ENCODE measurements at regions of chr1 and their contacts with region 1.

Region 1: GRCh38 chr1:11907275-11908094 is 18.7 kb downstream of the KIAA2013 start:
- DNase-seq: peak; percentile 95
- H3K4me3 Mint-ChIP-seq: peak overlapping the region; percentile 92
- H3K27ac Mint-ChIP-seq: peak overlapping the region; percentile 99
- H3K4me1 Mint-ChIP-seq: peaks cover 37% of the 10 kb centered on the region
- H3K27me3 Mint-ChIP-seq: peaks cover 16% of the 10 kb centered on the region

Region 2: GRCh38 chr1:11051781-11052511 is 855.5 kb before region 1 on chr1:
- CTCF ChIA-PET with region 1: no interaction called
- POLR2A ChIA-PET with region 1: no interaction called
- intact Hi-C with region 1: no loop called
- DNase-seq: no peak
- H3K4me3 Mint-ChIP-seq: no peak overlapping the region
- H3K27ac Mint-ChIP-seq: peak overlapping the region; percentile 34
- H3K4me1 Mint-ChIP-seq: peaks cover 6% of the 10 kb centered on the region
- H3K27me3 Mint-ChIP-seq: no peaks in the 10 kb centered on the region

Region 3: DNA sequence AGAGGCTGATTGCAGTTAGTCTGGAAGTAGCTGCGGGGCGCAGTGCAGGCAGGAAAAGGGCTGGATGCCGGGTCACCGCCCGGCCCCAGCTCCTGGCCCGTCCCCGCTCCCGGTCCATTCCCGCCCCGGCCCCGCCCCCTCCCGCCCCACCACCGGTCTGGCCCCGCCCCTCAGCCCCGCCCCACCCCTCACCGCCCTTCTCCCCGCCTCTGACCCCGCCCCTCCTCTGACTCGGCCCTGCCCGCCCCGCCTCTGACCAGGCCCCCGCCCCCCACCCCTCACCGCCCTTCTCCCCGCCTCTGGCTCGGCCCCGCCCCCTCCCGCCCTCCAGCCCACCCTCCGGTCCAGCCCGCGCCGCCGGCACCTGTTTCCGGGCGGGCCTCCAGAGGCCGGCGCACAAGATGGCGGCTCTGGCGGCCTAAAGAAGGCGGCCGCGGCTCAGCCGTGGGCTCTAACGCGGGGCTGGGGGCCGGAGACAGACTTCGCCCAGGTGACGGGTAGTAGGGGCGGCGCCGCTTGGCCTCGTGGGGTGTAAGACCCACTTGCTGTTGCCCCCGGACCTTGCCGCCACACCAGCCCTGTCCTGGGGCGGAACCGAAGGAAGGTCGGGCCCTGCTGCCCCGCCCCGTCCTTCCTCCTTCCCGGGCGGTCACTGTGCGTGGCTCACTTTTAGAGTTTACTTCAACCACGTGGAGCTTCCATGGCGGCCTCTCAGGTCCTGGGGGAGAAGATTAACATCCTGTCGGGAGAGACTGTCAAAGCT is 634.5 kb before region 1 on chr1 and contains the start of gene UBIAD1:
- CTCF ChIA-PET with region 1: no interaction called
- POLR2A ChIA-PET with region 1: interaction called, 3 read pairs
- intact Hi-C with region 1: loop called (anchors 5 kb)
- DNase-seq: peak; percentile 90
- H3K4me3 Mint-ChIP-seq: peak within 1 kb of the TSS; percentile 96
- H3K27ac Mint-ChIP-seq: peak within 1 kb of the TSS; percentile 89
- H3K4me1 Mint-ChIP-seq: peaks cover 30% of the 10 kb centered on the region
- H3K27me3 Mint-ChIP-seq: no peaks in the 10 kb centered on the region
- total RNA-seq, gene UBIAD1: 21.4 to 22.4 TPM

Region 4: DNA sequence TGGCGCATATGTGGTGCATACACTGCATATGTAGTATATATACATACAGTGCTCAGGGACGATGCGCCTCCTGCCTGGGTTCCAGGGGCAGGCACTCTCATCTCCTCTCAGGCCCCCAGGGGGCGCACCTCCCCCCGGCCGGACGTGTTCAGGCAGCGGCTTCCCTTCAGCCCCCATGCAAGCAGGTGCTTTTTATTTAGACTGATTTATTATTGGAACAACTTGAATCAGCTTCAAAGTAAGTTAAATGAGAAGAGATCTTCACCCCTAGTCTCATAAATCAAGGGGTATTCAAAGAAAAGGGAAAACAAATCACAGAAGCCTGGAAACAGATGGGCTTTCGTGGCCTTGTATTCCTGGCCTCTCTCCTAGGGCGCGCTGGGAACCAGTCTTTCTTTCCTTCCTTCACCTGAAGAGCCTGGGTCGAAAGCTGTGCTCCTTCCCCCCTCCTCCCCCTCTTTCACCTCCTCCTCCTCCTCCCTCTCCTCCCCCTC is 569.9 kb before region 1 on chr1:
- CTCF ChIA-PET with region 1: no interaction called
- POLR2A ChIA-PET with region 1: no interaction called
- intact Hi-C with region 1: no loop called
- DNase-seq: peak; percentile 77
- H3K4me3 Mint-ChIP-seq: no peak overlapping the region
- H3K27ac Mint-ChIP-seq: no peak overlapping the region
- H3K4me1 Mint-ChIP-seq: peaks cover 5% of the 10 kb centered on the region
- H3K27me3 Mint-ChIP-seq: peaks cover 17% of the 10 kb centered on the region

Region 5: GRCh38 chr1:11735854-11736745 is 171.4 kb before region 1 on chr1 and contains the start of gene AGTRAP:
- CTCF ChIA-PET with region 1: no interaction called
- POLR2A ChIA-PET with region 1: interaction called, 11 read pairs
- intact Hi-C with region 1: no loop called
- DNase-seq: peak; percentile 93
- H3K4me3 Mint-ChIP-seq: peak within 1 kb of the TSS; percentile 96
- H3K27ac Mint-ChIP-seq: peak within 1 kb of the TSS; percentile 85
- H3K4me1 Mint-ChIP-seq: peaks cover 49% of the 10 kb centered on the region
- H3K27me3 Mint-ChIP-seq: no peaks in the 10 kb centered on the region
- total RNA-seq, gene AGTRAP: 16.5 to 18.0 TPM

Region 6: GRCh38 chr1:11772458-11772857 is 135.0 kb before region 1 on chr1:
- CTCF ChIA-PET with region 1: no interaction called
- POLR2A ChIA-PET with region 1: no interaction called
- intact Hi-C with region 1: no loop called
- DNase-seq: no peak
- H3K4me3 Mint-ChIP-seq: no peak overlapping the region
- H3K27ac Mint-ChIP-seq: no peak overlapping the region
- H3K4me1 Mint-ChIP-seq: no peaks in the 10 kb centered on the region
- H3K27me3 Mint-ChIP-seq: no peaks in the 10 kb centered on the region

Region 7: DNA sequence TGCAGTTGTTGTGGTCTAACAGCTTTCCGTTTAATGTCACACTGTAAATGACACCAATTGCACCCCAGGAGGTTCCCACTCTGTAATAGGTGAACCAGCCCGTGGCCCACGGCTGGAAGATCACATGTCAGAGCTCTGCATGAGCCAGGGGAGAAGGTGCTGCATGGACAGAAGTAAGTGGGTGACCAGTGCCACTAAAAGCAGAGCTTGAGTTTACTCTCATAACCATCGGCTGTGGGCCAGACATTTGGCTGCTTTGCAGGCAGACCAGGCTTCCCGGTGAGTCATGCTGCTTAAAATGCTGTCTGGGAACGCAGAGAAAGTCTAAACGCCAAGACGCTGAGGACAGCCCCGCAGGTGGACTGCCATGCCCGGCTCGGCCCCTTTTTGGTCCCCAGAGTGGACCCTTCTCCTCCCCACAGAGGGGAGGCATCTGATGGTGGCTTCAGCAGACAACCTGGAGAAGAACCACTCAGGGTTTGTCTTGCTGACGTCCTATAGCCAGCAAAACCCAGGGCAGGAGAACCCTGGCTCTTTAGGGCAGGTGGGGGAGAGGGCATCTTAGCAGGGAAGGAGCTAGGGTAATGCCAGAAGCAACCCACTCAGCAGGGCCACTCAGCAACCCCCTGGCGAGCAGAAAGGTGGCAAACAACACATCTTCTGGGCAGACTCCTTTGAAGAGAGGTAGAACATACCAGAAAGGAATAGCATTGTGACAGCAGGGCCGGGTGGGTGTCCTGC is 11.5 kb after region 1 on chr1:
- CTCF ChIA-PET with region 1: no interaction called
- POLR2A ChIA-PET with region 1: interaction called, 72 read pairs
- intact Hi-C with region 1: no loop called
- DNase-seq: no peak
- H3K4me3 Mint-ChIP-seq: no peak overlapping the region
- H3K27ac Mint-ChIP-seq: no peak overlapping the region
- H3K4me1 Mint-ChIP-seq: peaks cover 25% of the 10 kb centered on the region
- H3K27me3 Mint-ChIP-seq: no peaks in the 10 kb centered on the region

Region 8: GRCh38 chr1:11979851-11980675 is 72.6 kb after region 1 on chr1 and contains the start of gene MFN2:
- CTCF ChIA-PET with region 1: interaction called, 7 read pairs
- POLR2A ChIA-PET with region 1: interaction called, 98 read pairs
- intact Hi-C with region 1: loop called (anchors 1 kb)
- DNase-seq: peak; percentile 95
- H3K4me3 Mint-ChIP-seq: peak within 1 kb of the TSS; percentile 90
- H3K27ac Mint-ChIP-seq: peak within 1 kb of the TSS; percentile 90
- H3K4me1 Mint-ChIP-seq: peaks cover 41% of the 10 kb centered on the region
- H3K27me3 Mint-ChIP-seq: no peaks in the 10 kb centered on the region
- total RNA-seq, gene MFN2: 52.0 to 58.1 TPM

Region 9: DNA sequence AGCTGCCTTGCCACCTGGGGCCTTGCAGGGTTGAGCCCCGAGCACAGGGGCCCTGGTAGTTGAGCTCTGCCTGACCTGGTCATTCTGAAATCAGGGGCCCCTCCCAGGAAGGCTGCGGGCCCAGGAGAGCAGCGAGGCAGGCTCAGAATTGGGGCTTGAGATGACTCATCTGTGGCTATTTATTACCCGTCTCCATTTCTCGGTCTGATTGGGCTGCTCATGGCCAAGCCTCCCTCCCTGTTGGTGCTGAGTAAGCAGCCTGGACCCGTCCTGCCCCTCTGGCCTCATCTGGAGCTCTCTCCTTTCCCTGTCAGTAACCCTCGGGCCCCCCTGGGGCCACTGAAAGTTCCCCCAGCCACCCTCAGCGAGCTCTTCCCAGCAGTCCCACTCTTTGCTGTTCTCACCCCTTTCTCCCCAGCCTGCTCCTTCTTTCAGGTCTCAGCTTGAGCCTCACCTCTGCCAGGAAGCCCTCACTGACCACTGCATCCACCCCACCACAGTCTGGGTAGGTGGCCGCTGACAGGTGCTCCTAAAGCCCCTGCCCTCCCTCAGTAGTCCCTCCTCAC is 144.6 kb after region 1 on chr1:
- CTCF ChIA-PET with region 1: interaction called, 3 read pairs
- POLR2A ChIA-PET with region 1: interaction called, 49 read pairs
- intact Hi-C with region 1: loop called (anchors 10 kb)
- DNase-seq: peak; percentile 80
- H3K4me3 Mint-ChIP-seq: no peak overlapping the region
- H3K27ac Mint-ChIP-seq: peak overlapping the region; percentile 49
- H3K4me1 Mint-ChIP-seq: peaks cover 50% of the 10 kb centered on the region
- H3K27me3 Mint-ChIP-seq: peaks cover 8% of the 10 kb centered on the region

Region 10: DNA sequence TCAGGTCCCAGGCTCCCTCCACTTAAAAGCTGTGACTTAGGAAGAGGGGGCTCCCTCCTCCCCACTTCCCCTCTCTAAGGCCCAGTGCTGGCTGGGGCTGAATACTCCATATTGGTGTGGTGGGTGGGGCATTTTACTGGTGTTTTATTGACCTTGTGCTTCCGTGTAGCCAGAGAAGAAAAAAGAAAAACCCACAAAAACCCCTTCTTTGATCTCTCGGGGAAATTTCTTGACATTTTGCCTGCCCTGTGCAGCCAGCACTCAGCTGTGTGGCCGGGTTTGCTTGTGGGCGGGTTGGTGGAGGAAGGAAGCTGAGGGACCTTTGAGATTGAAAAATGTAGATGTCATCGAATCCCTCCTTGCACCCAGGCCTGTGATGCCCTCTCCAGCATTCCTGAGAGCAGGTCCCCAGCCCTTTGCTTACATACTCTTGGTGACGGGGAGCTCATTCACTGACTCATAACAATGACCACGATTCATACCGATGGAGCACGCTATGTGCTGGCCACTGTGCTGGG is 180.4 kb after region 1 on chr1:
- CTCF ChIA-PET with region 1: no interaction called
- POLR2A ChIA-PET with region 1: interaction called, 11 read pairs
- intact Hi-C with region 1: no loop called
- DNase-seq: peak; percentile 77
- H3K4me3 Mint-ChIP-seq: peak overlapping the region; percentile 43
- H3K27ac Mint-ChIP-seq: peak overlapping the region; percentile 90
- H3K4me1 Mint-ChIP-seq: peaks cover 46% of the 10 kb centered on the region
- H3K27me3 Mint-ChIP-seq: no peaks in the 10 kb centered on the region

Region 11: DNA sequence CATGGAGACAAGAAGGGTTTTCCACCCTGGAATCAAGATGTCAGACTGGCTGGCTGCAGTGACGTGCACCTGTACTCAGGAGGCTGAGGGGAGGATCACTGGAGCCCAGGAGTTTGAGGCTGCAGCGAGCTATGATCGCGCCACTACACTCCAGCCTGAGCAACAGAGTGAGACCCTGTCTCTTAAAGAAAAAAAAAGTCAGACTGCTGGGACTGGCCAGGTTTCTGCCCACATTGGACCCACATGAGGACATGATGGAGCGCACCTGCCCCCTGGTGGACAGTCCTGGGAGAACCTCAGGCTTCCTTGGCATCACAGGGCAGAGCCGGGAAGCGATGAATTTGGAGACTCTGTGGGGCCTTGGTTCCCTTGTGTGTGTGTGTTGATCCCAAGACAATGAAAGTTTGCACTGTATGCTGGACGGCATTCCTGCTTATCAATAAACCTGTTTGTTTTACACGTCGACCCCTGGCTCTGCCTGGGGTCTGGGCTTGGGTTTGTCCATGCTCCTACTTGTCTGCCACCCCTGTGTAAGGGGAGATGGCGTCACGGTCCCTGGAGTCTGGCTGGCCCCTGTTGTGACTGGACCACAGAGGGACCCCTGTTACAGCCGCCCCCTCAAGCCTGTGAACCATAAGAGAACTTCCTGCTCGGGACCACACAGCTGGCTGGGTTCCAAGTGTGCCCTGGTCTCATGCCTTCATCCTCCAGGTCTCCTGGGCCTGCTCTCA is 301.4 kb after region 1 on chr1:
- CTCF ChIA-PET with region 1: no interaction called
- POLR2A ChIA-PET with region 1: no interaction called
- intact Hi-C with region 1: no loop called
- DNase-seq: peak; percentile 91
- H3K4me3 Mint-ChIP-seq: no peak overlapping the region
- H3K27ac Mint-ChIP-seq: peak overlapping the region; percentile 44
- H3K4me1 Mint-ChIP-seq: peaks cover 45% of the 10 kb centered on the region
- H3K27me3 Mint-ChIP-seq: no peaks in the 10 kb centered on the region

Measured in activated CD4-positive, alpha-beta memory T cell treated with anti-CD3 and anti-CD28 coated beads for 36 hours (primary cell).